ENCODE measurements at regions of chr19 and their contacts with region 1.

Region 1: GRCh38 chr19:9584073-9584833 is at the start of gene ZNF121:
- DNase-seq: peak; percentile 88
- H3K4me3 ChIP-seq: peak within 1 kb of the TSS; percentile 65 to 77 (median 72)
- H3K27ac ChIP-seq: peak within 1 kb of the TSS; percentile 86 to 92 (median 89)
- H3K4me1 ChIP-seq: peaks cover 7 to 16% (median 9%) of the 10 kb centered on the region in 4 donors
- H3K27me3 ChIP-seq: peaks cover 12% of the 10 kb centered on the region
- CTCF ChIP-seq: no peak
- EP300 ChIP-seq: no peak
- POLR2A ChIP-seq: peak; percentile 49
- total RNA-seq, gene ZNF121: 10.1 to 21.0 (median 14.0) TPM

Region 2: GRCh38 chr19:9140159-9140874 is 443.9 kb before region 1 on chr19 and contains the start of gene ZNF317:
- in situ Hi-C with region 1: loop called in 1 of 4 experiments (anchors 25 kb)
- intact Hi-C with region 1: no loop called
- DNase-seq: peak; percentile 95
- H3K4me3 ChIP-seq: peak within 1 kb of the TSS; percentile 71 to 88 (median 81)
- H3K27ac ChIP-seq: peak within 1 kb of the TSS; percentile 87 to 92 (median 91)
- H3K4me1 ChIP-seq: peaks cover 3 to 33% (median 16%) of the 10 kb centered on the region in 4 donors
- H3K27me3 ChIP-seq: no peaks in the 10 kb centered on the region
- CTCF ChIP-seq: no peak
- EP300 ChIP-seq: no peak
- POLR2A ChIP-seq: peak; percentile 53
- total RNA-seq, gene ZNF317: 20.6 to 25.1 (median 22.5) TPM

Region 3: DNA sequence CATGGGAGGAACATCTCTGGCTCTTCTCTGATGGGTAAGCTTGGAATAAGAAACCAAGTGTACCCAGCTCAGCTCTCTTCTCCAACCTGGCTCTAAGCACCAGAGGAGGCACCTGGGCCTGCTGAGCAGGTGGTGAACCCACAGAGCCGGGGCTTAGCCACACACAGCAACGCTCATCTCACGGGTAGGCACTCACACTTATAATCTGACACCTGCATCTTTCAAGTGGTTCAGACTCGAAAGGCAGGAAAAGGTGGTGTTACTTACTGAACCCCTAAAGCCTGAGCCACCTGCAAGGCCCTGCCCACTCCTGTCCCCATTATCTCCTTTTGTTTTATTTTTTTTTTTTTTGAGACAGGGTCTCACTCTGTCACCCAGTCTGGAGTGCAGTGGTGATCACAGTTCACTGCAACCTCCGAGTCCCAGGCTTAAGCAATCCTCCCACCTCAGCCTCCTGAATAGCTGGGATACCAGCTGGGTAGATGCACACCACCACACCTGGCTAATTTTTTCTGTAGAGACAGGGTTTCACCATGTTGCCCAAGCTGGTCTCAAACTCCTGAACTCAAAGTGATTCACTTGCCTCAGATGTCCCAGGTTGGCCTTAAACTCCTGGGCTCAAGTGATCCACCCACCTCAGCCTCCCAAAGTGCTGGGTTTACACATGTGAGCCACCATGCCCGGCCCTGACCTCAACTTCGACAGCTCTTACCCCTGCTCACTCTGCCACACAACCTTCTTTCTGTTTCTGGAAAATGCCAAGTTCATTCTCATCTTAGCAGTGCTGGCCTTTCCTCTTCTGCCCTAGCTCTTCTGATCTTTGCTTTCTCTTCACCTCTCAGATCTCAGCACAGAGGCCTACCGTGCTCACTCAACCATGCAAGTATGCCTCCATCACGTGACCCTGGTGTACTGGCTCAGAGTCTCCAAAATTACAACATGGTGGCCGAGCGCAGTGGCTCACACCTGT is 224.9 kb after region 1 on chr19:
- in situ Hi-C with region 1: no loop called
- intact Hi-C with region 1: no loop called
- DNase-seq: no peak
- H3K4me3 ChIP-seq: no peak overlapping the region
- H3K27ac ChIP-seq: no peak overlapping the region
- H3K4me1 ChIP-seq: no peaks in the 10 kb centered on the region
- H3K27me3 ChIP-seq: no peaks in the 10 kb centered on the region
- CTCF ChIP-seq: no peak
- EP300 ChIP-seq: no peak
- POLR2A ChIP-seq: no peak

Measured in transverse colon (tissue), 4 donors.